Panc1 (cell line): ENCODE measurements at regions of chr20 and their contacts with region 1.

Region 1: DNA sequence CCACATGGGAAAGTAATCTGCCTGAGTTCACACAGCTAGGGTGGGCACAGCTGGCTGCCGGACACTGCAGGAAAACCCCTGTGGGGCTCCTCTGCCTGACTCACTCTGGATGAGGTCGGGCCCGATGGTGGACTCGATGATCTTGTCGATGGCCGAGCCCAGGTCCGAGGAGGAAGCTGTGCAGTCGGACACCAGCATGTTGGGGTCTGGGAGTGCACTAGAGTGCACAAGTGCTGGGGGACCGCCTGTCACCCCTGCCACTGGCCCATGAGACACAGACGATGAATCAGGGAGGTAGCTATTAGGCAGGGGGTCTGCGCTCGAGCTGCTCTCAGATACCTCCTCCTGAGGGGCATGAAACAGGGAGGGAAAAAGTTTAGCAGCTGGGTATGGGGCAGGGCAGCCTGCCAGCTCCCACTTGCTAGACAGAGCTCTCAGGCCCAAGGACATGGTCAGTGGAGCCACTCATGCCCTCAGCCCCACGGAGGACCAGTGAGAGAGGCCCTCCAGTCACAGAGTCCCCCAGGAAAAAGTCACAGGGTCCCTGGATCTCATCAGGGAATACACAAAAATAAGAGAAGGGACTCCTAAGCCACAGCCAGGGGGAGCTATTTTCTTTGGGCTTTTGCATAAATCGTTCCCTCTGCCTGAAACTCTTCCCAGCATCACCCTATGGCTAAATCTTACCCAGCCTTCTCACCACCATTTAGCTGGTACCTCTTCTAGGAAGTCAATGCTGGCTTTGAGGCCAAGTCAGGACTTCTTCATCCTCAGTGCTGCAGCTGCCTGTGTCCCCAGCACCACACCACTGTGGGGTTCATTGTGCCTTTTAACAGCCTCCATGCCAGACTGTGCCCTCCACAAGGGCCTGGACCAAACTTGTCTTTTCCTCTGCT is 2.4 kb downstream of the ZNF335 start:
- DNase-seq: no peak
- ATAC-seq: no peak
- H3K4me3 ChIP-seq: peak overlapping the region; percentile 62 to 93
- H3K27ac ChIP-seq: peak overlapping the region; percentile 99; the same call in 1 of the 2 replicates
- H3K4me1 ChIP-seq: peaks cover 7% of the 10 kb centered on the region
- H3K27me3 ChIP-seq: no peaks in the 10 kb centered on the region
- CTCF ChIP-seq: peak; percentile 89

Region 2: GRCh38 chr20:44521484-44522481 is 1447.8 kb before region 1 on chr20 and contains the start of gene SERINC3:
- CTCF ChIA-PET with region 1: no interaction called
- POLR2A ChIA-PET with region 1: no interaction called
- in situ Hi-C with region 1: no loop called
- intact Hi-C with region 1: no loop called
- DNase-seq: peak; percentile 87
- ATAC-seq: peak; percentile 99
- H3K4me3 ChIP-seq: peak within 1 kb of the TSS; percentile 94 to 96
- H3K27ac ChIP-seq: peak within 1 kb of the TSS; percentile 92
- H3K4me1 ChIP-seq: peaks cover 7% of the 10 kb centered on the region; the same call in 1 of the 2 replicates
- H3K27me3 ChIP-seq: no peaks in the 10 kb centered on the region
- CTCF ChIP-seq: no peak
- total RNA-seq, gene SERINC3: 76.4 TPM

Region 3: GRCh38 chr20:45880988-45881788 is 88.4 kb before region 1 on chr20 and contains the start of gene ZSWIM1:
- CTCF ChIA-PET with region 1: no interaction called
- POLR2A ChIA-PET with region 1: interaction called, 10 read pairs
- in situ Hi-C with region 1: no loop called
- intact Hi-C with region 1: no loop called
- DNase-seq: peak; percentile 98
- ATAC-seq: peak; percentile 99
- H3K4me3 ChIP-seq: peak within 1 kb of the TSS; percentile 70 to 95
- H3K27ac ChIP-seq: peak within 1 kb of the TSS; percentile 95
- H3K4me1 ChIP-seq: peaks cover 4% of the 10 kb centered on the region; the same call in 1 of the 2 replicates
- H3K27me3 ChIP-seq: no peaks in the 10 kb centered on the region
- CTCF ChIP-seq: no peak
- total RNA-seq, gene ZSWIM1: 13.4 TPM